ENCODE measurements at regions of chr3 and their contacts with region 1.

Region 1: GRCh38 chr3:22595008-22595407 is 608.1 kb upstream of the UBE2E2 start:
- DNase-seq: peak; percentile 71
- ATAC-seq: peak; percentile 95
- H3K4me3 ChIP-seq: no peak overlapping the region
- H3K27ac ChIP-seq: no peak overlapping the region
- H3K4me1 ChIP-seq: peaks cover 16% of the 10 kb centered on the region; the same call in 1 of the 2 replicates
- H3K27me3 ChIP-seq: no peaks in the 10 kb centered on the region
- CTCF ChIP-seq: no peak

Region 2: DNA sequence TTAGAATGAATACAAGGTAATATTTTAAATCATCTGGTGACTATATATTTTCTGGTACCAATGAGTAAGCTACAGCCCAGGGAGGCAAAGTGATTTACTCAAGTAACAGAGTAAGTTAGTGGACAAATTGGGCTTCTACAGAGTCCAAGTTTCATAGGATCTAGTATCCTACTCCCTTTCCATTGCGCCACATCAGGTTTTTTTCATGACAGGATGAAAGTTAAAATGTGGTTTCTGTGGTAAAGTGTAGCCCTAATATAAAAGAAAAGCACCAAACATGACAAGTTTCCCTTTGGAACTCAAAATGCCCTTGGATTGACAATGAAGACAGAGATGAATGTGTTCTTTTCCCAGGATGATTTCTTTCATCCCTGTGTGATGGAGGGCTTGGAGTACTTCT is 493.2 kb before region 1 on chr3:
- CTCF ChIA-PET with region 1: no interaction called
- POLR2A ChIA-PET with region 1: no interaction called
- intact Hi-C with region 1: no loop called
- DNase-seq: peak; percentile 20
- ATAC-seq: no peak
- H3K4me3 ChIP-seq: no peak overlapping the region
- H3K27ac ChIP-seq: no peak overlapping the region
- H3K4me1 ChIP-seq: peaks cover 21% of the 10 kb centered on the region
- H3K27me3 ChIP-seq: no peaks in the 10 kb centered on the region
- CTCF ChIP-seq: no peak

Region 3: GRCh38 chr3:22377421-22377820 is 217.6 kb before region 1 on chr3:
- CTCF ChIA-PET with region 1: no interaction called
- POLR2A ChIA-PET with region 1: no interaction called
- intact Hi-C with region 1: no loop called
- DNase-seq: peak; percentile 83
- ATAC-seq: peak; percentile 98
- H3K4me3 ChIP-seq: no peak overlapping the region
- H3K27ac ChIP-seq: no peak overlapping the region
- H3K4me1 ChIP-seq: peaks cover 16% of the 10 kb centered on the region
- H3K27me3 ChIP-seq: no peaks in the 10 kb centered on the region
- CTCF ChIP-seq: no peak

Region 4: DNA sequence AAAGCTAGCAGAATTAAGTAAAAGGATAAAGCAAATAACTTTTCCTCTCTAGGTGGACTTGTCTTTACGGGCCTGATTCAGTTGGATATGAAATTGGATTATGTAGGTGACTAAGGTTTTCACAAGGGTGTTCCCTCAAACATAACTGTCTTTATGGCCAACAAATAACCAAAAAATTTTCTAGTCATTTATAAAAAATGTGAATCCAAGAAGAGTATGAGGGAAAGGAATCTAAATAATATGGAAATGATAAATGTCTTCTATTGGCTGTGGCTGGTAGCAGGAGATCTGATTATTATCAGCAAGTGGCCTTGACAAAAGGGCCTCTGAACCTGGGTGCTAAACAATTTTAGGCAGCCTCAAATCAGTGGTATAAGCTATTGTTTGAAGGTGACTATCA is 14.1 kb after region 1 on chr3:
- CTCF ChIA-PET with region 1: no interaction called
- POLR2A ChIA-PET with region 1: no interaction called
- intact Hi-C with region 1: loop called (anchors 1 kb)
- DNase-seq: peak; percentile 65
- ATAC-seq: peak; percentile 86
- H3K4me3 ChIP-seq: no peak overlapping the region
- H3K27ac ChIP-seq: peak overlapping the region; percentile 35
- H3K4me1 ChIP-seq: peaks cover 27% of the 10 kb centered on the region
- H3K27me3 ChIP-seq: no peaks in the 10 kb centered on the region
- CTCF ChIP-seq: no peak